Transverse colon (tissue), 4 donors: ENCODE measurements at regions of chr10 and their contacts with region 1.

Region 1: DNA sequence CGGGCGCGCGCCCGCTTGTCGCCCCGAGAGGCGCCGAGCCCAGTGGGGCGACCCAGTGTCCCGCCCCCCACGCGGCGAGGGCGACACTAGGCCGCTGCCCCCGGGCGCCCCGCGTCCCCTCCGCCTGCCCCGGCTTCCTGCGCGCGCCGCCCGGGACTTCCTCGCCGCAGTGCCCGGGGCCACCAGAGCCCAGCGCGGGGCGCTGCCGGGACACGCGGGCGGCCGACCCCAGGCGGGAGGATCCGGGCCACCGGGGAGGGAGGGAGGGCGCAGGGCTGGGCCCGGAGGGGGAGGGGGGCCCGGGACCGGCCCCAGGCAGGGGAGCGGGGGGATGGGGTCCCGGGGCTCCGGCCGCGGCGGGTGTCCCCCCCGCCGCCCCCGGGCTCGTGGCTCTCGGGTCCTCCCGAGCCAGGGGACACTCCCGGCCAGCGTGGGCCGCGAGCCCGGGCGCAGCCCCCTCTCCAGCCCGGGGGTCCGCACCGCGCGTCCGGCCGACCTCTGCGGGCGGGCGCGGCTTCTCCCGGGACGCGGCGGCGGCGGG is 435 bp upstream of the PWWP2B start:
- DNase-seq: peak; percentile 77
- H3K4me3 ChIP-seq: peak overlapping the region; percentile 19 to 72 (median 69)
- H3K27ac ChIP-seq: peak overlapping the region; percentile 88 to 98 (median 96)
- H3K4me1 ChIP-seq: peaks cover 26 to 57% (median 52%) of the 10 kb centered on the region in 4 donors
- H3K27me3 ChIP-seq: no peaks in the 10 kb centered on the region
- CTCF ChIP-seq: peak in 3 of 5 experiments; percentile 21 to 52 (median 32)
- EP300 ChIP-seq: no peak
- POLR2A ChIP-seq: no peak

Region 2: DNA sequence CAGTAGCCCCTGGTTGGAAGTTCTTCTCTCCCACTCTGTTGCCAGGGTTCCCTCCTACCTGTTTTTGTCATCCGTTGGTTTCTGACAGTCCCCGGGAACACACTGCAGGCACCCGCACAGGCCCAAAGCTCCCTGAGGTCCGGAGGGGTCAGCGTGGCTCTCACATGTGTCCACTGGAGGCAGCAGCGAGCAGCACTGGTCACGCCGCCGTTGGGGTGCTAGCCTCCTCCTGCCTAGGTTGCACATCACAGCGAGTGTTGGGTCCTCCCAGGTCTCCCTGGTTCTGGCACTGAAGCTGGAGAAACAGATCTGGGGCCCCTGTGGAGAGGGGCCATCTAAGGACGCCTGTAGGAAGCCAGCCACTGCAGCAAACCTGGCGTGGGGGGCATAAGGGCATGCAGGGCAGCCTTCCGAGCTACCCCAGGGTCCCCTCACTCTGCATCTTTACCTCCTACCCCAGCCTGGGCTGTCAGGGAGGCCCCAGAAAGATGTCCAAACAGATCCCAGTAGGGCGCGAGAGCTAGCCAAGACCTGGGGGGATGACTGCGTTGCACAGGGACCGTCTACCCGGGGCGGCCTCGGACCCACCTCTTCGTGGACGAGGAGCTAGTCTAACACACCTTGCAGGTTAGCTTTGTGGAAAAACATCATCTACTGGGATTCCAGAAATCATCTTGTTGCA is 35.7 kb before region 1 on chr10:
- in situ Hi-C with region 1: no loop called
- intact Hi-C with region 1: no loop called
- DNase-seq: no peak
- H3K4me3 ChIP-seq: no peak overlapping the region
- H3K27ac ChIP-seq: no peak overlapping the region
- H3K4me1 ChIP-seq: no peaks in the 10 kb centered on the region
- H3K27me3 ChIP-seq: no peaks in the 10 kb centered on the region
- CTCF ChIP-seq: peak in 4 of 5 experiments; percentile 41 to 57 (median 52)
- EP300 ChIP-seq: no peak
- POLR2A ChIP-seq: no peak

Region 3: GRCh38 chr10:132643709-132644526 is 247.4 kb after region 1 on chr10:
- in situ Hi-C with region 1: loop called in 1 of 4 experiments (anchors 25 kb)
- intact Hi-C with region 1: loop called (anchors 5 kb)
- DNase-seq: no peak
- H3K4me3 ChIP-seq: no peak overlapping the region
- H3K27ac ChIP-seq: peak overlapping the region in 1 of 4 donors; percentile 9
- H3K4me1 ChIP-seq: peaks cover 0 to 17% (median 10%) of the 10 kb centered on the region in 4 donors
- H3K27me3 ChIP-seq: no peaks in the 10 kb centered on the region
- CTCF ChIP-seq: no peak
- EP300 ChIP-seq: no peak
- POLR2A ChIP-seq: no peak